ENCODE measurements at regions of chr19 and their contacts with region 1.

Region 1: GRCh38 chr19:28324275-28325060 is 888.5 kb downstream of the UQCRFS1 start:
- DNase-seq: no peak
- H3K4me3 ChIP-seq: no peak overlapping the region
- H3K27ac ChIP-seq: no peak overlapping the region
- H3K4me1 ChIP-seq: no peaks in the 10 kb centered on the region
- H3K27me3 ChIP-seq: no peaks in the 10 kb centered on the region
- CTCF ChIP-seq: no peak

Region 2: GRCh38 chr19:27793644-27794493 is 530.6 kb before region 1 on chr19:
- CTCF ChIA-PET with region 1: interaction called, 12 read pairs
- POLR2A ChIA-PET with region 1: no interaction called
- intact Hi-C with region 1: no loop called
- DNase-seq: peak; percentile 86 to 87
- H3K4me3 ChIP-seq: peak overlapping the region; percentile 87
- H3K27ac ChIP-seq: peak overlapping the region; percentile 88
- H3K4me1 ChIP-seq: peaks cover 17% of the 10 kb centered on the region
- H3K27me3 ChIP-seq: no peaks in the 10 kb centered on the region
- CTCF ChIP-seq: no peak; the same call in 1 of the 2 replicates

Region 3: GRCh38 chr19:27966390-27966816 is 358.1 kb before region 1 on chr19:
- CTCF ChIA-PET with region 1: no interaction called
- POLR2A ChIA-PET with region 1: no interaction called
- intact Hi-C with region 1: loop called (anchors 1 kb)
- DNase-seq: no peak
- H3K4me3 ChIP-seq: no peak overlapping the region
- H3K27ac ChIP-seq: no peak overlapping the region
- H3K4me1 ChIP-seq: no peaks in the 10 kb centered on the region
- H3K27me3 ChIP-seq: no peaks in the 10 kb centered on the region; the same call in 1 of the 2 replicates
- CTCF ChIP-seq: peak; percentile 72

Region 4: GRCh38 chr19:27974082-27974513 is 350.4 kb before region 1 on chr19:
- CTCF ChIA-PET with region 1: no interaction called
- POLR2A ChIA-PET with region 1: no interaction called
- intact Hi-C with region 1: loop called (anchors 2 kb)
- DNase-seq: no peak
- H3K4me3 ChIP-seq: no peak overlapping the region
- H3K27ac ChIP-seq: no peak overlapping the region
- H3K4me1 ChIP-seq: 0 out of 2 replicates have a peak, but pooled peaks cover 4% of the 10 kb centered on the region
- H3K27me3 ChIP-seq: no peaks in the 10 kb centered on the region
- CTCF ChIP-seq: peak; percentile 67

Region 5: GRCh38 chr19:28454083-28454482 is 129.6 kb after region 1 on chr19:
- CTCF ChIA-PET with region 1: no interaction called
- POLR2A ChIA-PET with region 1: no interaction called
- intact Hi-C with region 1: no loop called
- DNase-seq: no peak
- H3K4me3 ChIP-seq: no peak overlapping the region
- H3K27ac ChIP-seq: no peak overlapping the region
- H3K4me1 ChIP-seq: no peaks in the 10 kb centered on the region
- H3K27me3 ChIP-seq: 0 out of 2 replicates have a peak, but pooled peaks cover 6% of the 10 kb centered on the region
- CTCF ChIP-seq: no peak

Region 6: DNA sequence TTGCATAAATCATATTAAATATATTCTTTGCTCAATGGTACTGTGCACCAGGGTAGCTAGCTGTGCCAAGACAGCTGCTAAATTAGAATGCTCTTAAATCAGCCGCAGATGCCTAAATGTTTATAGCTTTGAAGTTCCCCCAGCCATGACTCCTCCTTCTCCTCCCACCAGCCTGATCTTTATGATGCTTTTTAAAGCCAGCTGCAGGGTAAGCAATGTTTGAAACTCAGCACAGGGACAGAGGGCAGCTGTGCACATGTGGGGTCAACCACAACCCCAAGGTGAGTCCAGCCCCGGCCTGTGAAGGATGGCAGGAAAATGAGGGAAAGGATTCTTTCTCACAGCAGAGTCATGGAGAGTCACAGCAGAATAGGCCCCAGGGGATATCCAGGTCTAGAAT is 252.8 kb after region 1 on chr19:
- CTCF ChIA-PET with region 1: no interaction called
- POLR2A ChIA-PET with region 1: no interaction called
- intact Hi-C with region 1: no loop called
- DNase-seq: no peak
- H3K4me3 ChIP-seq: no peak overlapping the region
- H3K27ac ChIP-seq: no peak overlapping the region
- H3K4me1 ChIP-seq: no peaks in the 10 kb centered on the region
- H3K27me3 ChIP-seq: peaks cover 8% of the 10 kb centered on the region; the same call in 1 of the 2 replicates
- CTCF ChIP-seq: no peak